BJ (cell line): ENCODE measurements at regions of chr2 and their contacts with region 1.

Region 1: DNA sequence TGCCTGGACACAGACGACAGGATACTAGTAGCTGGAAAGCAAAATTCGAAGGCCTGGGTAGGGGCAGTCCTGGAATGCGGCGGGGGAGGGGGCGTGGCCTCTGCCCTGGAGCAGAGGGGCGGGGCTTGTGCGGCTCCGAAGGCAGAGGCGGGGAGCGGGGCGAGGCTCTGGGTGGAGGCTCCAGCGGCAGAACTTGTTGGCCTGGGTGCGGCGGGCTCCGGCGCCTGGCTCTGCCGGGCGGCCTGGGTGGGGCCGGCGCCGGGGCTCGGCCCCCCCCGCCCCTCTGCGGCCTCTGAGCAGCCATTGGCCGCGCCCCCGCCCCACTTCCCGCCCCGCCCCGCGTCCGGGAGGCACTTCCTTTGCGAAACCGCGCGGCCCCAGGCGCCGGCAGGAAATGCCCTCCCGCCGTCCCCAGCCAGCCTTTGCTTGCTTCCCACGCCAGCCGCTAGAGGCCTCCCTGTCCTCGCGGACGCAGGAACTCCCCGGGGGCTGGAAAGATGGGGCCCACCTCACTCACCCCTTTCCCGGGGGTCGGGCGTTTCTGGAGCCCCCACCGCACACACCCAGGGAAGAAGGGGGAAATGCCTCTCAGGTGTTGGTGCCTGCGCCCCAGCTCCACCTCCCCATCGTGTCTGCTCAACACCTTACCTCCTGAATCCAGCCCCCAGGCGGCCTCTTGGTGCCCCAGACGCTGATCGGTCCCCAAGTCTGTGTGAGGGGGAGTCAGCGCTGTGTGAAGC is 6.7 kb downstream of the CTDSP1 start:
- DNase-seq: peak; percentile 76
- H3K4me3 ChIP-seq: peak overlapping the region; percentile 28
- H3K27me3 ChIP-seq: no peaks in the 10 kb centered on the region
- CTCF ChIP-seq: peak; percentile 90

Region 2: GRCh38 chr2:218292048-218293014 is 114.0 kb before region 1 on chr2 and contains the start of gene TMBIM1:
- CTCF ChIA-PET with region 1: no interaction called
- POLR2A ChIA-PET with region 1: interaction called, 15 read pairs
- DNase-seq: no peak
- H3K4me3 ChIP-seq: peak within 1 kb of the TSS; percentile 89
- H3K27me3 ChIP-seq: no peaks in the 10 kb centered on the region
- CTCF ChIP-seq: peak; percentile 56
- polyA plus RNA-seq, gene TMBIM1: 116 and 206 TPM in 2 replicates

Region 3: GRCh38 chr2:219010162-219010756 is 603.9 kb after region 1 on chr2:
- CTCF ChIA-PET with region 1: no interaction called
- POLR2A ChIA-PET with region 1: no interaction called
- DNase-seq: no peak
- H3K4me3 ChIP-seq: no peak overlapping the region
- H3K27me3 ChIP-seq: peaks cover 12% of the 10 kb centered on the region
- CTCF ChIP-seq: peak; percentile 36